ENCODE measurements at regions of chr12 and their contacts with region 1.

Region 1: DNA sequence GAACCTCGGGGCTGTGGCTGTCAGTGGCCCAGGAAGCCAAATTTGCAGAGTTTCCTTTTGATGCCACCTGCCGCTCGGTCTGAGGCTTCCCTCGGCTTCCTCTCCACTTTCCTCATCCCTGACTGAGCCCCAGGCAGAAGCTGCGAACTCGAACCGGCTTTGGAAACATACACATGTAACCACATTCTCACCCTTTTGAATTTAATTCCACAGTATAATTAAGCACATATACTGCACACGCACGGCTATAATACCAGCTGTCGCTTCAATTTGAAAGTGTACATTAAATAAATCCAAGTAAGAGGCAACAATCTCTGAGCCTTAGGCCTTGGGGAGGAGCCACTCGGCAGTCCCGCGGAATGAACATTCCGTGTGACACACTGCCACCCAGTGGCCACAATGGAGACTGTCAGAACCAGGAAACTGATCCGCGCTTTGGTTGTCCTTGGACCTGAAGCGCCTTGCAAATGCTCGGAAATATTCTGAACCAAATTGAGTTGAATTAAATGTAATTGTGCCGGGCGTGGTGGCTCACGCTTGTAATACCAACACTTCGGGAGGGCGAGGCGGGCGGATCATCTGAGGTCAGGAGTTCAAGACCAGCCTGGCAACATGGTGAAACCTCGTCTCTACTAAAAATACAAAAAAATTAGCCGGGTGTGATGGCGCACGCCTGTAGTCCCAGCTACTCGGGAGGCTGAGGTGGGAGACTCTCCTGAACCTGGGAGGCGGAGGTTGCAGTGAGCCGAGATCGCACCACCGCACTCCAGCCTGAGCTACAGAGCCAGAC is 117.9 kb upstream of the TMPO start:
- DNase-seq: peak; percentile 81
- ATAC-seq: peak; percentile 92
- H3K4me3 ChIP-seq: peak overlapping the region; percentile 35 to 65 (median 49)
- H3K4me3 Mint-ChIP-seq: peak overlapping the region; percentile 84
- H3K27ac ChIP-seq: peak overlapping the region in 1 of 2 donors; percentile 32
- H3K27ac Mint-ChIP-seq: no peak overlapping the region
- H3K4me1 ChIP-seq: peaks cover 13 to 18% of the 10 kb centered on the region in 2 donors
- H3K4me1 Mint-ChIP-seq: peaks cover 27% of the 10 kb centered on the region
- H3K27me3 ChIP-seq: no peaks in the 10 kb centered on the region
- H3K27me3 Mint-ChIP-seq: no peaks in the 10 kb centered on the region
- CTCF ChIP-seq: peak; percentile 94

Region 2: DNA sequence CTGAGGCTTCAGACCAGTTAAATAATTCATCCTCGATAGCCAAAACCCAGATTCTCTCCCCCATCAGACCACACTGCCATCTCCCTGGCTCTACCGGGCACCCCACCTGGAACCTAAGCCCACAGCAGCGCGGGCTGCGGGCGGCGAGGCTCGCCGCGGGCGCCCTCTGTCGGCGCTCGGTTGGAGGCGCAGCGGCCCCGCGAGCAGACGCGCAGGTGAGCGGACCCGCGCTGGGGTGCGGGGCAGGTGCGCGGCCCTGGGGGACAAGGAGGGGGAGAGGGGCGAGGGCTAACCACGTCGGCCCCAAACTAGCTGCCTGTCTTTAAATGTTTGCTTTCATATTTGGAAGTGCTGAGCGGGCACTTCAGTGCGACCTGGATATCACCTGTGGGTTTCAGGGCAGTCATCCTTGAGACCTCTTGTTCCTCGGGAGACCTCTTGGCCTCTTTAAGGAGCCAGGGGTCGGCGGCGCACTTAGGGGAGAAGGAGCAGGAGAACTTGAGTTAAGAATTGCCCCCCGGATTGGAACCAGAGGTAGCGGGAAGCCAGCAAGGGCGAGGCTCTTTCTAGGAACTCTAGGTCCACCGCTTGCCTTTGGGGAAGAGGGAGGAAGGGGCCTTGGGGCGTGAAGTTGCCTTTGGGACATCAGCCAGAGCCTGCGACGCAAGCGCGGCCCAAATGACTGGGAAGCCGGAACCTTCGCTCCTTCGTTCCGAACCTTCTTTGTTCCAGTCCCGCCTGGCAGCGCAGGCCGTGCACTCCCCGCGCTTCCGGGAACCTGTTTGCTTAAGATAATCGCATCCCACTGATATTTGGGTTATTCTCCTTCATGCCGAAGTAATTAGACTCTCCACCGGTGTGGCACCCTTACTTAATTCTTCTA is 1411.8 kb before region 1 on chr12:
- CTCF ChIA-PET with region 1: interaction called, 3 read pairs
- POLR2A ChIA-PET with region 1: no interaction called
- intact Hi-C with region 1: loop called (anchors 5 kb)
- DNase-seq: peak; percentile 67
- ATAC-seq: peak; percentile 83
- H3K4me3 ChIP-seq: peak overlapping the region in 4 of 5 experiments; percentile 14 to 59 (median 42)
- H3K4me3 Mint-ChIP-seq: peak overlapping the region; percentile 66
- H3K27ac ChIP-seq: no peak overlapping the region
- H3K27ac Mint-ChIP-seq: no peak overlapping the region
- H3K4me1 ChIP-seq: peaks cover 10 to 12% of the 10 kb centered on the region in 2 donors
- H3K4me1 Mint-ChIP-seq: peaks cover 6% of the 10 kb centered on the region
- H3K27me3 ChIP-seq: peaks cover 0 to 20% (median 18%) of the 10 kb centered on the region in 4 experiments
- H3K27me3 Mint-ChIP-seq: peaks cover 40% of the 10 kb centered on the region
- CTCF ChIP-seq: peak; percentile 92

Region 3: GRCh38 chr12:97148941-97149559 is 1248.5 kb before region 1 on chr12:
- CTCF ChIA-PET with region 1: interaction called, 12 read pairs
- POLR2A ChIA-PET with region 1: no interaction called
- intact Hi-C with region 1: no loop called
- DNase-seq: peak; percentile 73
- ATAC-seq: peak; percentile 87
- H3K4me3 ChIP-seq: no peak overlapping the region
- H3K4me3 Mint-ChIP-seq: no peak overlapping the region
- H3K27ac ChIP-seq: no peak overlapping the region
- H3K27ac Mint-ChIP-seq: no peak overlapping the region
- H3K4me1 ChIP-seq: no peaks in the 10 kb centered on the region
- H3K4me1 Mint-ChIP-seq: no peaks in the 10 kb centered on the region
- H3K27me3 ChIP-seq: peaks cover 0 to 5% (median 2%) of the 10 kb centered on the region in 4 experiments
- H3K27me3 Mint-ChIP-seq: peaks cover 20% of the 10 kb centered on the region
- CTCF ChIP-seq: peak; percentile 84

Region 4: GRCh38 chr12:98515368-98516183 is 118.1 kb after region 1 on chr12 and contains the start of gene TMPO:
- CTCF ChIA-PET with region 1: no interaction called
- POLR2A ChIA-PET with region 1: no interaction called
- intact Hi-C with region 1: no loop called
- DNase-seq: peak; percentile 98
- ATAC-seq: peak; percentile 71
- H3K4me3 ChIP-seq: peak within 1 kb of the TSS; percentile 72 to 100 (median 91)
- H3K4me3 Mint-ChIP-seq: peak within 1 kb of the TSS; percentile 99
- H3K27ac ChIP-seq: peak within 1 kb of the TSS; percentile 78 to 96
- H3K27ac Mint-ChIP-seq: peak within 1 kb of the TSS; percentile 99
- H3K4me1 ChIP-seq: peaks cover 39 to 47% of the 10 kb centered on the region in 2 donors
- H3K4me1 Mint-ChIP-seq: peaks cover 48% of the 10 kb centered on the region
- H3K27me3 ChIP-seq: no peaks in the 10 kb centered on the region
- H3K27me3 Mint-ChIP-seq: no peaks in the 10 kb centered on the region
- CTCF ChIP-seq: no peak
- total RNA-seq, gene TMPO: 177 and 187 TPM in 2 replicates

Region 5: GRCh38 chr12:98618952-98619351 is 221.4 kb after region 1 on chr12:
- CTCF ChIA-PET with region 1: no interaction called
- POLR2A ChIA-PET with region 1: no interaction called
- intact Hi-C with region 1: no loop called
- DNase-seq: no peak
- ATAC-seq: no peak
- H3K4me3 ChIP-seq: no peak overlapping the region
- H3K4me3 Mint-ChIP-seq: no peak overlapping the region
- H3K27ac ChIP-seq: no peak overlapping the region
- H3K27ac Mint-ChIP-seq: no peak overlapping the region
- H3K4me1 ChIP-seq: peaks cover 4 to 6% of the 10 kb centered on the region in 2 donors
- H3K4me1 Mint-ChIP-seq: peaks cover 10% of the 10 kb centered on the region
- H3K27me3 ChIP-seq: no peaks in the 10 kb centered on the region
- H3K27me3 Mint-ChIP-seq: no peaks in the 10 kb centered on the region
- CTCF ChIP-seq: no peak